Breast epithelium (tissue), 4 donors: ENCODE measurements at regions of chr17 and their contacts with region 1.

Region 1: GRCh38 chr17:40209404-40210093 is 9.6 kb upstream of the WIPF2 start:
- DNase-seq: no peak
- H3K4me3 ChIP-seq: no peak overlapping the region
- H3K27ac ChIP-seq: no peak overlapping the region
- H3K4me1 ChIP-seq: no peaks in the 10 kb centered on the region
- H3K27me3 ChIP-seq: no peaks in the 10 kb centered on the region
- CTCF ChIP-seq: no peak
- POLR2A ChIP-seq: no peak

Region 2: DNA sequence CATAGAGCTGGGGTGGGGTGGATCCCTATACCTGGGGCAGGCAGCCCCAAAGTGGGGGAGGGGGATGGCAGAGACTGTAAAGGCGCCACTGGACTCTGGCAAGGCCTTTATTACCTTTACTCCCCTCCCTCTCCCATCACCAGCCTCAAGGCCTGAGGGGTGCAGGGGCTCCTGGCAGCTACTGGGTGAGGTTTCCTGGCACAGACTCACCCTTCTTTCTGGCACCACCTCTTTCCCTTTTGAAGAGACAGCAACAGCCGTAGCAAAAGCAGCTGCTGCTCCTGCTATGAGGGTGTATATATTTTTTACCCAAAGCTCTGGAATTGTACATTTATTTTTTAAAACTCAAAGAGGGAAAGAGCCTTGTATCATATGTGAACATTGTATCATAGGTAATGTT is 14.7 kb before region 1 on chr17:
- intact Hi-C with region 1: loop called (anchors 1 kb)
- DNase-seq: no peak
- H3K4me3 ChIP-seq: no peak overlapping the region
- H3K27ac ChIP-seq: no peak overlapping the region
- H3K4me1 ChIP-seq: peaks cover 0 to 3% of the 10 kb centered on the region in 2 donors
- H3K27me3 ChIP-seq: no peaks in the 10 kb centered on the region
- CTCF ChIP-seq: no peak
- POLR2A ChIP-seq: no peak

Region 3: DNA sequence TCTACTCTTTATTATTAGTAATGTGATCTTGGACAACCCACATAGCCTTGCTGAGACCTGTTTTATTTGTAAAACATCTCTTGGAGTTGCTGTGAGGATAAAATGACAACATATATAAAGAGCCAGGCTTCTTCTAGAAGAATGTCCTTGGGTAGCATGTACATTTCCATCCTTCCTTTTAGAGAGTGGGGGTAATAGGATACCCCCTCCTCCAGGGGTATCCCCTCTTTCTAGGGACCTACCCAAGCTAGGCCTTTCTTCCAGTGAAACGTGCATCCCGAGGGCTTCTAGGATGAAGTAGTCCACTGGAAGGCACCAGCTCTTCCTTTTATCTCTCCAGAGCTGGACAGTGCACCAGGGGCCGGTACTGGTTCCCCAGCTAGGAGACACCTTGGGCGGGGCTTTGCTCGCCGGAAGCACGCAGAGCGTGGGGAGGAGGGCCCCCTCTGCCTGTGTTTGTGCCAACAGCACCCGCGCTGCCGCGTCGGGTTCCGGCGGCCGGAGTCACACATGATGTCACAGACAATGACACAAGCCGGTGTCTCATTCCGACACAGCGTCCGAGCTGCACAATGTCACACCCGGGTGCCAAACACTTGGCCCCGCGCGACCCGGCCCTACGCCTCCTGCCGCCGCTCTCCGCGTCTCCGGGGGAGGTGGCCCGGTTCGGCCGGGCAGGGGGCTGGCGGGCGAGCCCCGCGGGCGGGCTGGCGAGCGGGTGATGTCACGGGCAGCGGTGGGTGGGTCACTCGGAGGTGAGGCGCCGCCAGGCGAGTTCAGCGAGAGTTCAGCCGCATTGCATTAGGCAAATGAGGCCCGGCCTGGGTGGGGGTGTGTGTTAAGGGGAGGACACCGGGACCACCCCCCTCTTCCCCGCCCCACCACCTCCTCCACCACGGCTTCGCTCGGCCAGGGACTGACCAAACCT is 131.6 kb after region 1 on chr17:
- intact Hi-C with region 1: no loop called
- DNase-seq: peak; percentile 89 to 91
- H3K4me3 ChIP-seq: peak overlapping the region; percentile 67 to 89 (median 81)
- H3K27ac ChIP-seq: peak overlapping the region; percentile 97 to 98
- H3K4me1 ChIP-seq: peaks cover 4 to 24% of the 10 kb centered on the region in 2 donors
- H3K27me3 ChIP-seq: no peaks in the 10 kb centered on the region
- CTCF ChIP-seq: peak in 1 of 3 donors; percentile 15
- POLR2A ChIP-seq: no peak